ENCODE measurements at regions of chr12 and their contacts with region 1.

Region 1: GRCh38 chr12:27779920-27780611 is at the starts of genes KLHL42 and MANSC4:
- DNase-seq: peak; percentile 68 to 89
- H3K4me3 ChIP-seq: peak within 1 kb of the TSS; percentile 80 to 94
- H3K27ac ChIP-seq: peak within 1 kb of the TSS; percentile 89 to 94
- H3K4me1 ChIP-seq: peaks cover 0 to 51% (median 24%) of the 10 kb centered on the region in 4 donors
- H3K27me3 ChIP-seq: no peaks in the 10 kb centered on the region
- CTCF ChIP-seq: no peak

Region 2: DNA sequence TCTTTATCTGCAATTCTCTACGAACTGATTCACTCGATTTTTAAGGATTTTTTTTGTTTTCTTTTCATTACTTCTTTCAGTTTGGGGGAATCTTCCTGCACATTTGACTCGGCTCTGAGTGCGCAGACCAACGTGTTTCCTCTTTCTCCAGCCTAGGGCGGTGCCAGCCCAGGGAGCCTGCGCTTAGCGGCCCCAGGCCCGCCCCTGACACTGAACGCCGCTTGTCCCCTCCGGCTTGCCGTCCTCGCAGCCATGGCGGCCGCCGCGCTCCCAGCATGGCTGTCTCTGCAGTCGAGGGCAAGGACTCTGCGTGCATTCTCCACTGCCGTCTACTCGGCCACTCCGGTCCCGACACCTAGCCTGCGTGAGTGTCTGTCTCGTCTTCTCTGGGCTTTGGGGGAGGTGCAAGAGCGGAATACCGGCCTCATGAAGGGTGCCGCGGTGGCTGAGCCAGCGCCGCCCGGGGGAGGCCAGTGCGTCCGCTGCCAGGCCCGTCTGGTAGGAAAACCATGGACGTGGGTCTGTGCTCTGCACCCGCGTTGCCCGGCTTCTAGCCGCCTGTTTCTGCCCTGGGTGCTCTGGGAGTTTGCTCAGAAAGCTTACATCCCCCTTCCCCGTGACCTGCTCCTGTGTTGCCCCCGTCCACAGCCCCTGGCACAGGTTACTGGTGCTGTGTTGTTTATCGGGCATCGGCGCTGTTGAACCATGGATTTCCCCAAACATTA is 69.3 kb before region 1 on chr12 and contains the start of gene MRPS35:
- intact Hi-C with region 1: loop called (anchors 2 kb)
- DNase-seq: peak; percentile 91 to 95
- H3K4me3 ChIP-seq: peak within 1 kb of the TSS; percentile 95 to 97
- H3K27ac ChIP-seq: peak within 1 kb of the TSS; percentile 84 to 85
- H3K4me1 ChIP-seq: peaks cover 0 to 23% (median 17%) of the 10 kb centered on the region in 4 donors
- H3K27me3 ChIP-seq: no peaks in the 10 kb centered on the region
- CTCF ChIP-seq: no peak